A673 (cell line): ENCODE measurements at regions of chr5 and their contacts with region 1.

Region 1: DNA sequence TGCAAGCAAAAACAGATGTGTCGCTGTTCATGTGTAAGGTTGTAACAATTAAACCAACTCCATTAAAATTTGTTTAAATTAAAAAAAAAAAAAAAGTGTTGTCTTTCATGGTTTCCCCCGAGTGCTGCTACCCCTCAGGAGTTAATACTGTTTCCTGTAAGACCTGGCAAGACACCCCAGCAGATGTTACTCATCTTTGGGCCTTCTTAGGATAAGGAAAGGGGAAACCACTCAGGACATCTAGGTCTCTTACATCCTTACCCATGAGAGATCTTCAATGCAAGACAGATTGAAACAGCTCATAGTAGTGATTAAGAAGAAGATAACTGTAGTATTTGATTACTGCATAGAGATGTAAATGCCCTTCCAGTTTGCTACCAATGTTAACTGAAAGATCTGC is 33.5 kb upstream of the F2R start:
- DNase-seq: peak; percentile 50
- H3K4me3 ChIP-seq: no peak overlapping the region
- H3K27ac ChIP-seq: peak overlapping the region; percentile 44
- H3K4me1 ChIP-seq: peaks cover 65% of the 10 kb centered on the region
- H3K27me3 ChIP-seq: no peaks in the 10 kb centered on the region
- CTCF ChIP-seq: no peak

Region 2: GRCh38 chr5:76473661-76474060 is 208.7 kb before region 1 on chr5:
- CTCF ChIA-PET with region 1: no interaction called
- POLR2A ChIA-PET with region 1: no interaction called
- intact Hi-C with region 1: no loop called
- DNase-seq: peak; percentile 95
- H3K4me3 ChIP-seq: no peak overlapping the region
- H3K27ac ChIP-seq: peak overlapping the region; percentile 38
- H3K4me1 ChIP-seq: peaks cover 17% of the 10 kb centered on the region
- H3K27me3 ChIP-seq: no peaks in the 10 kb centered on the region
- CTCF ChIP-seq: no peak

Region 3: GRCh38 chr5:76617675-76618074 is 64.7 kb before region 1 on chr5:
- CTCF ChIA-PET with region 1: no interaction called
- POLR2A ChIA-PET with region 1: no interaction called
- intact Hi-C with region 1: loop called (anchors 5 kb)
- DNase-seq: no peak
- H3K4me3 ChIP-seq: no peak overlapping the region
- H3K27ac ChIP-seq: no peak overlapping the region
- H3K4me1 ChIP-seq: peaks cover 63% of the 10 kb centered on the region
- H3K27me3 ChIP-seq: no peaks in the 10 kb centered on the region
- CTCF ChIP-seq: no peak